ENCODE measurements at regions of chr1 and their contacts with region 1.

Region 1: DNA sequence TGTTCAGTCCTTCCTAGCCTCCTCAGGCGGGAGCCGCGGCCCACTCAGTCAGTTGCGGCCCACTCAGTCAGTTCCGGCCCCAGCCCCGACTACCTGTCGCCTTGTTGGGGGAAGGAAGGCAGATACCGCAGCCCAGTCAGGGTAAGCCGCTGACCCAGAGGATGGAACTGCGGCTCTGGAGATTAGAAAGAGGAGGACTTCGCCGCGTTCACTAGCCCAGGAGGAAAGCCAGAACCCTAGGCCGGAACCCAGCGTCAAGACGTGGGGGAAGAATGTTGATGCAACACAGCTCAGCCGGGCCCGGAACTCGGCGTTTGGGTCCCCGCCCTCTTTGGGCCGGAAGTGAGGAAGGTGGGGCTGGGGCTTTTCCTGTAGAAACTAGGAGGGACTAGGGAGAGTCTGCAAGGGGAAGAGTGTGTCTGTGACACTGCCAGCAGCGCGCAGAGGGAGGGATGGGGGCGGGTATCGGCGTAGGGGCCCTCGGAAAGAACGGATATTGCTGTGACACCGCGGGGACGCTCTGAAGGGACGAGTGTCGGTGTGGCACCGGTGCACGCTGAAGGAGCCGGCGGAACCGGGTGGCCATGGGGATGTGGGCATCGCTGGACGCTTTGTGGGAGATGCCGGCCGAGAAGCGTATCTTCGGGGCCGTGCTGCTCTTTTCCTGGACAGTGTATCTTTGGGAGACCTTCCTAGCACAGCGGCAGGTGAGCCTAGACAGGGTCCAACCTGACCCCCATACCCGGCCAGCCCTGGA is at the start of gene ZMPSTE24:
- DNase-seq: peak; percentile 94
- H3K4me3 Mint-ChIP-seq: peak within 1 kb of the TSS; percentile 96
- H3K27ac Mint-ChIP-seq: peak within 1 kb of the TSS; percentile 99
- H3K4me1 Mint-ChIP-seq: peaks cover 55% of the 10 kb centered on the region
- H3K27me3 Mint-ChIP-seq: no peaks in the 10 kb centered on the region
- total RNA-seq, gene ZMPSTE24: 50.2 and 56.0 TPM in 2 replicates

Region 2: GRCh38 chr1:40059338-40059959 is 198.4 kb before region 1 on chr1:
- intact Hi-C with region 1: loop called (anchors 5 kb)
- DNase-seq: peak; percentile 3
- H3K4me3 Mint-ChIP-seq: peak overlapping the region; percentile 53
- H3K27ac Mint-ChIP-seq: peak overlapping the region; percentile 78
- H3K4me1 Mint-ChIP-seq: peaks cover 83% of the 10 kb centered on the region
- H3K27me3 Mint-ChIP-seq: no peaks in the 10 kb centered on the region

Region 3: GRCh38 chr1:40185951-40186864 is 71.7 kb before region 1 on chr1:
- intact Hi-C with region 1: loop called (anchors 1 kb)
- DNase-seq: peak; percentile 21
- H3K4me3 Mint-ChIP-seq: peak overlapping the region; percentile 72
- H3K27ac Mint-ChIP-seq: peak overlapping the region; percentile 69
- H3K4me1 Mint-ChIP-seq: peaks cover 62% of the 10 kb centered on the region
- H3K27me3 Mint-ChIP-seq: no peaks in the 10 kb centered on the region

Region 4: DNA sequence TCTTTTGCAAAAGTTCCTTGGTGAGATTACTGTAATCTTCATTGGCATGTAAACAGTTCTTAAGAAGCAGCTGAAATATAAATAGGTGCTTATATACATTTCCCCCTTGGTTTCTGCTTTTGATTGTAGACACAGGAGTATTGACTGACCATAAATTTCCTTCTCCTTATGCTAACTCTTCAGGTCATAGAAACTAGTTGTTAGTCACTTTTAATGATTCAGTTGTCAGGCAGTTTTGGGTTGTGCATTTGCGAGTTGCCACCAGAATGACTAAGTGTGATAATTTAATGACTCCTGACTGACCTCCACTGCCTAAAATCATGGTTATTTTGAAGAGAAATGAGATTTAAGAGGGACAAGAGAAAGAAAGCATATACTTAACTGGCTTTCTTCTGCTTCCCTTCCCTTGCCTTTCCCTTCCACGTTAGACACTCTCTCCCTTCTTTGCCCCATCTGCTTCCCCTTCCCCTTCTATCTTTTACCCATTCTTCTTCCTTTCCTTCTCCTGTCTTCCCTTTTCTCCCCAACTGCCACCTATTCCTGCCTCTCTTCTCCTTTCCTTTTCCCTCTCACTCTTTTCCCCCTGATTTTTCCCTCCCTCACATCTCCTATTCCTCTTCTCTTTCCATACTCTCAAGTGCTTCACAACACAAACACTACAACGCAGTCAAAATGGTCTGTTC is 12.4 kb after region 1 on chr1:
- intact Hi-C with region 1: loop called (anchors 1 kb)
- DNase-seq: no peak
- H3K4me3 Mint-ChIP-seq: no peak overlapping the region
- H3K27ac Mint-ChIP-seq: peak overlapping the region; percentile 84
- H3K4me1 Mint-ChIP-seq: peaks cover 22% of the 10 kb centered on the region
- H3K27me3 Mint-ChIP-seq: no peaks in the 10 kb centered on the region

Region 5: GRCh38 chr1:40404670-40405462 is 147.0 kb after region 1 on chr1:
- intact Hi-C with region 1: loop called (anchors 2 kb)
- DNase-seq: no peak
- H3K4me3 Mint-ChIP-seq: peak overlapping the region; percentile 70
- H3K27ac Mint-ChIP-seq: peak overlapping the region; percentile 94
- H3K4me1 Mint-ChIP-seq: peaks cover 75% of the 10 kb centered on the region
- H3K27me3 Mint-ChIP-seq: no peaks in the 10 kb centered on the region

Region 6: GRCh38 chr1:40691538-40692428 is 433.9 kb after region 1 on chr1 and contains the start of gene NFYC:
- intact Hi-C with region 1: loop called (anchors 5 kb)
- DNase-seq: peak; percentile 96
- H3K4me3 Mint-ChIP-seq: peak within 1 kb of the TSS; percentile 94
- H3K27ac Mint-ChIP-seq: peak within 1 kb of the TSS; percentile 98
- H3K4me1 Mint-ChIP-seq: peaks cover 62% of the 10 kb centered on the region
- H3K27me3 Mint-ChIP-seq: no peaks in the 10 kb centered on the region
- total RNA-seq, gene NFYC: 79.0 and 85.1 TPM in 2 replicates

Region 7: GRCh38 chr1:40769815-40770214 is 511.9 kb after region 1 on chr1:
- intact Hi-C with region 1: no loop called
- DNase-seq: no peak
- H3K4me3 Mint-ChIP-seq: no peak overlapping the region
- H3K27ac Mint-ChIP-seq: peak overlapping the region; percentile 61
- H3K4me1 Mint-ChIP-seq: peaks cover 47% of the 10 kb centered on the region
- H3K27me3 Mint-ChIP-seq: no peaks in the 10 kb centered on the region

Measured in activated T-helper 1 cell treated with anti-CD3 and anti-CD28 coated beads, Interleukin-12 subunit alpha, Interleukin-12 subunit beta, Interleukin-2, Interleukin-4 antibody, amounts not matched to agents 30 ng/mL and 10 ng/mL and 1 ng/mL, durations not matched to agents 14 hours and 24 hours and 36 hours (primary cell).